Caco-2 (cell line): ENCODE measurements at regions of chr1 and their contacts with region 1.

Region 1: GRCh38 chr1:8182034-8182761 is 135.7 kb upstream of the SLC45A1 start:
- DNase-seq: peak; percentile 75 to 76
- H3K4me3 ChIP-seq: no peak overlapping the region
- H3K4me3 Mint-ChIP-seq: peak overlapping the region; percentile 59
- H3K27ac Mint-ChIP-seq: peak overlapping the region; percentile 82
- H3K4me1 ChIP-seq: peaks cover 18% of the 10 kb centered on the region
- H3K4me1 Mint-ChIP-seq: peaks cover 13% of the 10 kb centered on the region
- H3K27me3 ChIP-seq: no peaks in the 10 kb centered on the region
- H3K27me3 Mint-ChIP-seq: no peaks in the 10 kb centered on the region
- CTCF ChIP-seq: no peak

Region 2: GRCh38 chr1:8121261-8122170 is 60.7 kb before region 1 on chr1:
- CTCF ChIA-PET with region 1: no interaction called
- POLR2A ChIA-PET with region 1: interaction called, 5 read pairs
- intact Hi-C with region 1: loop called (anchors 5 kb)
- DNase-seq: peak; percentile 12 to 50
- H3K4me3 ChIP-seq: no peak overlapping the region
- H3K4me3 Mint-ChIP-seq: peak overlapping the region; percentile 40
- H3K27ac Mint-ChIP-seq: peak overlapping the region; percentile 79
- H3K4me1 ChIP-seq: peaks cover 56% of the 10 kb centered on the region
- H3K4me1 Mint-ChIP-seq: peaks cover 42% of the 10 kb centered on the region
- H3K27me3 ChIP-seq: no peaks in the 10 kb centered on the region
- H3K27me3 Mint-ChIP-seq: no peaks in the 10 kb centered on the region
- CTCF ChIP-seq: no peak

Region 3: GRCh38 chr1:8154621-8155052 is 27.6 kb before region 1 on chr1:
- CTCF ChIA-PET with region 1: interaction called, 4 read pairs
- POLR2A ChIA-PET with region 1: no interaction called
- intact Hi-C with region 1: loop called (anchors 1 kb)
- DNase-seq: peak; percentile 84 to 92
- H3K4me3 ChIP-seq: no peak overlapping the region
- H3K4me3 Mint-ChIP-seq: peak overlapping the region; percentile 60
- H3K27ac Mint-ChIP-seq: peak overlapping the region; percentile 83
- H3K4me1 ChIP-seq: peaks cover 15% of the 10 kb centered on the region
- H3K4me1 Mint-ChIP-seq: peaks cover 10% of the 10 kb centered on the region
- H3K27me3 ChIP-seq: no peaks in the 10 kb centered on the region
- H3K27me3 Mint-ChIP-seq: no peaks in the 10 kb centered on the region
- CTCF ChIP-seq: no peak

Region 4: GRCh38 chr1:8169364-8170058 is 12.7 kb before region 1 on chr1:
- CTCF ChIA-PET with region 1: no interaction called
- POLR2A ChIA-PET with region 1: no interaction called
- intact Hi-C with region 1: loop called (anchors 1 kb)
- DNase-seq: peak; percentile 72 to 82
- H3K4me3 ChIP-seq: no peak overlapping the region
- H3K4me3 Mint-ChIP-seq: peak overlapping the region; percentile 53
- H3K27ac Mint-ChIP-seq: peak overlapping the region; percentile 91
- H3K4me1 ChIP-seq: peaks cover 27% of the 10 kb centered on the region
- H3K4me1 Mint-ChIP-seq: peaks cover 11% of the 10 kb centered on the region
- H3K27me3 ChIP-seq: no peaks in the 10 kb centered on the region
- H3K27me3 Mint-ChIP-seq: no peaks in the 10 kb centered on the region
- CTCF ChIP-seq: no peak

Region 5: GRCh38 chr1:8238851-8239305 is 56.7 kb after region 1 on chr1:
- CTCF ChIA-PET with region 1: no interaction called
- POLR2A ChIA-PET with region 1: no interaction called
- intact Hi-C with region 1: loop called (anchors 1 kb)
- DNase-seq: peak; percentile 73 to 85
- H3K4me3 ChIP-seq: no peak overlapping the region
- H3K4me3 Mint-ChIP-seq: peak overlapping the region; percentile 27
- H3K27ac Mint-ChIP-seq: peak overlapping the region; percentile 72
- H3K4me1 ChIP-seq: peaks cover 28% of the 10 kb centered on the region
- H3K4me1 Mint-ChIP-seq: peaks cover 27% of the 10 kb centered on the region
- H3K27me3 ChIP-seq: no peaks in the 10 kb centered on the region
- H3K27me3 Mint-ChIP-seq: no peaks in the 10 kb centered on the region
- CTCF ChIP-seq: no peak

Region 6: DNA sequence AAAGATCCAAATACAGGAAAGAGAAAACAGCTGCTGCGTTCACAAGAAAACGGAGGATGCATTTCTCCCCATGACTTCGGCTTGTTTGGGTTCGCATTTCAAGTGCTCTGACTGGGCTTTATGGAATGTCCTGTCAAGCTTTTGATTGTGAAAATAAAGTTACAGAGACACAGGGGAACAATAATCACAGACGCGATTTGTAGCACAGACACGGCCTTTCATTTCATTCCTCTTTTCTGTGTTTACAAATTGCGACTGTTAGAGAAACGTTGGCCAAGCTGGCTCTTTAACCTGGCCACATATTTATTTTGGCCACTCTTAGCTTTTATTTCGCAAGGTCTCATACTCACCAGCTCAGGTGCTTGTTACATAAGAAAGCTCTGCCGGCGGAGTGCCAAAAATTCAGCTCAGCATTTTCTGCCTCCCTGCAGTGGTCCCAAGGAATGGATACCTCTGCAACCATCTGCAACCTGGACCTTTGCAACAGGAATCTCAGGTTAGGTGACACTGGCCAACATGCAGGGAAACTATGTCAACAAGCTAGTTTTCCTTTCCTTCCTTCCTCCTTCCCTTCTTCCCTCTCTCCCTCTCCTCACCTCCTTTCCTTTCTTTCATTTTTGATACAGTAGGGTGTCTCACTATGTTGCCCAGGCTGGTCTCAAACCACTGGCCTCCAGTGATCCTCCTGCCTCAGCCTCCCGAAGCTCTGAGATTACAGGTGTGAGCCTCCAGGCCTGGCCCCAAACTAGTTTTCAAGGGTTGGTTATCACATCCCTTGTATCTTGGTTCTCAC is 77.5 kb after region 1 on chr1:
- CTCF ChIA-PET with region 1: no interaction called
- POLR2A ChIA-PET with region 1: no interaction called
- intact Hi-C with region 1: loop called (anchors 2 kb)
- DNase-seq: peak in 1 of 2 experiments; percentile 25
- H3K4me3 ChIP-seq: peak overlapping the region; percentile 11; the same call in 1 of the 2 replicates
- H3K4me3 Mint-ChIP-seq: peak overlapping the region; percentile 53
- H3K27ac Mint-ChIP-seq: peak overlapping the region; percentile 87
- H3K4me1 ChIP-seq: peaks cover 16% of the 10 kb centered on the region
- H3K4me1 Mint-ChIP-seq: peaks cover 26% of the 10 kb centered on the region
- H3K27me3 ChIP-seq: no peaks in the 10 kb centered on the region
- H3K27me3 Mint-ChIP-seq: no peaks in the 10 kb centered on the region
- CTCF ChIP-seq: no peak